GM13976 (cell line): ENCODE measurements at regions of chr2 and their contacts with region 1.

Region 1: GRCh38 chr2:9813312-9814133 is 29.8 kb upstream of the TAF1B start:
- DNase-seq: peak; percentile 89
- CTCF ChIP-seq: peak; percentile 92

Region 2: GRCh38 chr2:10057231-10058107 is 243.9 kb after region 1 on chr2:
- in situ Hi-C with region 1: loop called (anchors 10 kb)
- DNase-seq: peak; percentile 68
- CTCF ChIP-seq: no peak